Transverse colon (tissue), 4 donors: ENCODE measurements at regions of chrX and their contacts with region 1.

Region 1: DNA sequence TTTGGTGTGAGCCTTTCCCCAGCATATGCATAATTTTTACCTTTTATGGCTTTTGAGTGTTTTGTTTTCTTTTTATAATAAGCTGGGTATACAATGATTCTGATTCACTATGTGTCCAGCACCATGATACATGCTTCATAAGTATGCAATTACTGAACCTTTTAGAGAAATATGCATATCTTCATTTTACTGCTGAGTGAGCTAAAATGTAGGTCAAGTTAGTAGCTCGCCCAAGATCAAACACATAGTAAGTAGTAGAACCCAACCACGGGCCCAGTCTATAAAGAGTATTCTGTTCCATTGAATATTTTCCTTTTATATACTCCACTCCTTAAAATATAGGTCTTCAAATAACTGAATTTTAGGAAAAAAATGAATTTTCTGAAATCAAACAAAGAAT is 362.4 kb upstream of the HTR2C start:
- DNase-seq: no peak
- H3K4me3 ChIP-seq: no peak overlapping the region
- H3K27ac ChIP-seq: no peak overlapping the region
- H3K4me1 ChIP-seq: no peaks in the 10 kb centered on the region
- H3K27me3 ChIP-seq: no peaks in the 10 kb centered on the region
- CTCF ChIP-seq: no peak
- EP300 ChIP-seq: no peak
- POLR2A ChIP-seq: no peak

Region 2: DNA sequence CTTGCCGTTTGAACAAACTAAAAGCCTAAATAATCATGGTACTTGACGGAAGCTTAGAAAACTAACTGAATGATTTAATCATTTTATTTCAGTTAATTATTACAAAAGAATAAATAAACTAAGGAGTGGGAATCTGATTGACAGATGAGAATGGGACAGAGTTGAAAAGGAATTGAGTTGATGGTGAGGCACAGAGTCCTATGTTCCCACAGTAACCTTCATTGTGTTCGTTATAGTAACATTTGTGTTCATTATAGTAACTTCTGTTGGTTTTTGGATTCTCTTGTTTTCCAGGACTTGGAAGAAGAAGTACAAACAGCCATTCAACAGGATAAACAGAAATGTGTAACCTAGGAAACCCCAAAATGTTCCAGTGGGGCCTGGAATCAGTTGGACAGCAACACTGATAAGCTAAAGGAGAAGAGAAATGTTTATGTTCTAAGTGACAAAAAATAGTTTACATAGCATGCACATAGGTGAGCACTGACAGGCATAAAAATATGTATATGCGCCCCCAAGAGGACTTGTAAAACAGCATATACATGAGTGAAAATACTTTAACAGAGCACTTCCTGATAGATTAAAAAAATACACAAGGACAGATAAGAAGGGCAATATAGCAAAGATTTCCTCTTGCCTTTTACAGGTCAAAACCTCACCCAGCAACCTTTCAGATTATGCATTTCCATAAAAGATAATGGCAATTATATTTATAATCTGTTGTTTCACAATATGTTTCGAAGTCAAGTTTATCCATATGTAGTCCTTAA is 143.8 kb after region 1 on chrX:
- in situ Hi-C with region 1: no loop called
- intact Hi-C with region 1: no loop called
- DNase-seq: no peak
- H3K4me3 ChIP-seq: no peak overlapping the region
- H3K27ac ChIP-seq: no peak overlapping the region
- H3K4me1 ChIP-seq: no peaks in the 10 kb centered on the region
- H3K27me3 ChIP-seq: no peaks in the 10 kb centered on the region
- CTCF ChIP-seq: no peak
- EP300 ChIP-seq: no peak
- POLR2A ChIP-seq: no peak

Region 3: DNA sequence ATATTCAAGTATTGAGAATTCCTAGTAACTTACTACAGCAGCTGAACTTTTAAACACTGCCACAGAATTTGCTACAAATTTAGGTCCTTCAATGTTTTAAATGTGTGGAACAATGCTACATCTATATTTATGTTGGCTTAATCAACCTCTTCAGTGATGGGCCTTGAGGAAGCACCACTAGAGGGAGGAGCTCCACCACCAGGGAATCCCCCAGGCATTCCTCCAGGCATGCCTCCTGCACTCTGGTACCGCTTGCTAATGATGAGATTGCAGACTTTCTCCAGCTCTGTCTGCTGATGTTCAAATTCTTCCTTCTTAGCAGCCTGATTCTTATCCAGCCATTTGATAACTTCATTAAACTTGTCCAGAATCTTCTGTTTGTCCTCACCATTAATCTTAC is 553.2 kb after region 1 on chrX:
- in situ Hi-C with region 1: no loop called
- intact Hi-C with region 1: loop called (anchors 5 kb)
- DNase-seq: no peak
- H3K4me3 ChIP-seq: no peak overlapping the region
- H3K27ac ChIP-seq: no peak overlapping the region
- H3K4me1 ChIP-seq: no peaks in the 10 kb centered on the region
- H3K27me3 ChIP-seq: no peaks in the 10 kb centered on the region
- CTCF ChIP-seq: no peak
- EP300 ChIP-seq: no peak
- POLR2A ChIP-seq: no peak